CD4-positive, alpha-beta T cell (primary cell): ENCODE measurements at regions of chr4 and their contacts with region 1.

Region 1: DNA sequence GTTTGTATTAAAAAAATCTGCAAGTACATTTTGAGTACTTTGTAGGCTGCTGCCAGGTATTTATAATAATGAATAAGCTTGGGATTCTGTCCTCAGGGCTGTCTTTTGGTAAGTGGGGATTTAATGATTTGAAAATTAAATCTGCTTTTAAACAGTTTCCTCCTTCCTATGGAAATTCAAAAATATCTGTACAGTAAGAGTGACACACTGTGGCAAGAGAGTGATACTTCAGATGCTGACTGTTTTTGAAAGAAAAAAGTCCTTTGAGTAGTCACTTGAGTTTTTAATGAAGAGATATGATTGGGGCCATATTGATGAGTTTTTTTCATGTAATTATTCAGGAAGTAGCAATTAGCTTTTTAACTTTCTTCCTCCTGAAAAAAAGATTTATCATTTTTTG is 49.2 kb downstream of the SMARCAD1 start:
- DNase-seq: peak in 2 of 14 experiments; percentile 4 to 7
- ATAC-seq: no peak
- H3K4me3 ChIP-seq: no peak overlapping the region
- H3K4me3 Mint-ChIP-seq: no peak overlapping the region
- H3K27ac ChIP-seq: no peak overlapping the region
- H3K27ac Mint-ChIP-seq: no peak overlapping the region
- H3K4me1 ChIP-seq: no peaks in the 10 kb centered on the region
- H3K4me1 Mint-ChIP-seq: no peaks in the 10 kb centered on the region
- H3K27me3 ChIP-seq: no peaks in the 10 kb centered on the region
- H3K27me3 Mint-ChIP-seq: no peaks in the 10 kb centered on the region
- CTCF ChIP-seq: no peak

Region 2: DNA sequence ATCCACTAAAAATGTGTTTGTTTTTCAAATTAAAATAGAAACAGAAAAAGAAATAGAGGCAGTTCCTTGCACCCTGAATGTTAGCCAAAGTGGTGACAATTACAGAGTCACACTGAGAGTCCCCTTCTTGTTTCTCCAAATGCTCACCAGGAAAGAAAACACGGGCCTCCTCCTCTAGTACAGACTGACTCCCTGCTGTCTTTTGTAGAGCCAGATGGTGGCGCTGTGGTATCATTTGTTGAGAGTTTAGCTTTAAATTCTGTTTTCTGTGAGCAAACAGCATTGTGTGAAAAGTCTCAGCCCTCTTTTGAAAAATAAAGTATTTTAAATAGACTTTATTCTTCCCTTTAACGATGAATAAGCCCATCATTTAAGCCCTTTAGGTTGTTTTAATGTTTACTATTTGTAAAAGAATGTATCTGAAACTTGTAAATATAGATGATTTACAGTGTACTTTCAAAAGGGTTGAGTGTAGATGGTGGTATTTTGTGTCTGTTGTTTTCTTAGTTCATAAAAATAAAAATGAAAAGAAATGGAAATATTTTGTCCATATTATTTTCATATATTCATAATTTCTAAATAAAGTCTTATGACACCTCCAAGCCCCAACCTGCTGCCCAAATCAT is 465.1 kb before region 1 on chr4:
- CTCF ChIA-PET with region 1: no interaction called
- POLR2A ChIA-PET with region 1: no interaction called
- intact Hi-C with region 1: loop called in 1 of 2 experiments (anchors 5 kb)
- DNase-seq: peak in 5 of 14 experiments; percentile 2 to 25 (median 14)
- ATAC-seq: no peak
- H3K4me3 ChIP-seq: no peak overlapping the region
- H3K4me3 Mint-ChIP-seq: no peak overlapping the region
- H3K27ac ChIP-seq: no peak overlapping the region
- H3K27ac Mint-ChIP-seq: no peak overlapping the region
- H3K4me1 ChIP-seq: no peaks in the 10 kb centered on the region
- H3K4me1 Mint-ChIP-seq: no peaks in the 10 kb centered on the region
- H3K27me3 ChIP-seq: no peaks in the 10 kb centered on the region
- H3K27me3 Mint-ChIP-seq: no peaks in the 10 kb centered on the region
- CTCF ChIP-seq: no peak